Common myeloid progenitor, CD34-positive (primary cell): ENCODE measurements at regions of chr15 and their contacts with region 1.

Region 1: DNA sequence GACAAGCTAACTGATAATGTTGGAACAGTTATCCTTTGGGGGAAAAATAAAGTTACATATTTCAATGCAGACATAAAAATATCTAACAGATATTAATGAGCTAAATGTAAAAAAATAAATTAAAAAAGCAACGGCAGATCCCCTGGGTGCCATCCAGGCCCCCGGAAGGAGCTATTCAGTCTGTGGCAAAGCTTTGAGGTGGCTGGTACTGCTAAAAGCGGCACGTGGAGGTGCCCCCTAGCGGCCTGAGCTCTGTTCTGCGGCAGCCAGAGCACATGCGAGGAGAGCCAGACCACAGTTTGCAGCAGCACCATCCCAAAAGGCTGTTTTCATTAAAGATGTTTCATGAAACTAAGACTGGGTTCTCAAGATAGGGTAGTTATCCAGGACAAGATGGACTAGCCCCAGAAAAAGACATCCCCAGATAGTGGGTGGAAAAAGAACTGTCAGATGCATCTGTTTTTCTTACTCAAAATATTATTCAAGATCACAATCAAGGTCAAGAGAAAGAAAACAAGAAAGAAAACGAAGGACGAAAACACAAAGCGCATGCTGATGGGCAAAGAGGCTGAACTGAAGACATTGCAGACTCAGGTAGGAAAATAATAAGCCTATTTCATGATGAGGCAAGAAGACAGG is 18.7 kb downstream of the AP3S2 start:
- DNase-seq: peak; percentile 77 to 86 (median 81)
- H3K4me3 ChIP-seq: no peak overlapping the region
- H3K27ac ChIP-seq: no peak overlapping the region
- H3K4me1 ChIP-seq: peaks cover 0 to 3% (median 0%) of the 10 kb centered on the region in 4 experiments
- H3K27me3 ChIP-seq: no peaks in the 10 kb centered on the region

Region 2: GRCh38 chr15:89740137-89740536 is 134.9 kb before region 1 on chr15:
- CTCF ChIA-PET with region 1: interaction called, 19 read pairs
- POLR2A ChIA-PET with region 1: no interaction called
- DNase-seq: peak; percentile 76 to 85 (median 78)
- H3K4me3 ChIP-seq: peak overlapping the region in 2 of 7 experiments; percentile 20 to 66
- H3K27ac ChIP-seq: no peak overlapping the region
- H3K4me1 ChIP-seq: peaks cover 0 to 2% (median 0%) of the 10 kb centered on the region in 4 experiments
- H3K27me3 ChIP-seq: no peaks in the 10 kb centered on the region

Region 3: DNA sequence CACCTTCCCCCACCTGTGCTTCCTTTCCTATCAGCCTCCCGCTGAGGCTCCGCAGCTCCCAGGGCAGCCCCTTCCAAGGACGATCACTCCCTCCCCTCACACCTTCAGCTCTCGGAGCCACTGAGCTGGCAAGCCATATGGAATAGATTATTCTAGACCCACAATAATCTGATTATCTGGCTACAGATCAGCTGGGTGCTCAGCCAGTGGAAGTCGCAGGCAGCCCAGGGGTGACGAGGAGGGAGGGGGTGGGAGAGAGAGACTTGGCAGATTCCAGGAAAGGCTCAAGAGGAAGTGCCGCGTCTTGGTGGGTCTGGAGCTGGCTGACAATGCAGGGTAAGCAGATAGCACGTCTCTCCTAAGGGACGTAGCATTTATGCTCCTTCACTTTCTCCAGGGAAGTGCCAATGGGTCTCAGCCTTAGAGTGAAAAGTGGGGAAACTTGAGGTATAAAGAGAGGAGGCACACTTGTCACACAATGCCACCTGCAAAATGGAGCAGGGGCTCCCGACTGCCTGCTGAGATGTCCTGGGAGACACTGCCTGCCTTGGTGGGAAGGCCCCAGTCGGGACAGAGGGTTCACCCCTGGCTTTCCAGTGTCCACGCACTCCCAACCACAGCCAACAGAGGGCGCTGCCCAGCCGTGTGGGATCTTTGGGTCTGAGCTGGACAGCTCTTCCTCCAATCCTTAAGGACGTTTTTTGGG is 114.6 kb before region 1 on chr15:
- CTCF ChIA-PET with region 1: interaction called, 240 read pairs
- POLR2A ChIA-PET with region 1: interaction called, 3 read pairs
- DNase-seq: peak; percentile 59 to 73 (median 67)
- H3K4me3 ChIP-seq: no peak overlapping the region
- H3K27ac ChIP-seq: no peak overlapping the region
- H3K4me1 ChIP-seq: peaks cover 0 to 13% (median 3%) of the 10 kb centered on the region in 4 experiments
- H3K27me3 ChIP-seq: no peaks in the 10 kb centered on the region

Region 4: GRCh38 chr15:89768060-89768500 is 107.0 kb before region 1 on chr15:
- CTCF ChIA-PET with region 1: interaction called, 240 read pairs
- POLR2A ChIA-PET with region 1: no interaction called
- DNase-seq: no peak
- H3K4me3 ChIP-seq: no peak overlapping the region
- H3K27ac ChIP-seq: no peak overlapping the region
- H3K4me1 ChIP-seq: no peaks in the 10 kb centered on the region
- H3K27me3 ChIP-seq: no peaks in the 10 kb centered on the region

Region 5: DNA sequence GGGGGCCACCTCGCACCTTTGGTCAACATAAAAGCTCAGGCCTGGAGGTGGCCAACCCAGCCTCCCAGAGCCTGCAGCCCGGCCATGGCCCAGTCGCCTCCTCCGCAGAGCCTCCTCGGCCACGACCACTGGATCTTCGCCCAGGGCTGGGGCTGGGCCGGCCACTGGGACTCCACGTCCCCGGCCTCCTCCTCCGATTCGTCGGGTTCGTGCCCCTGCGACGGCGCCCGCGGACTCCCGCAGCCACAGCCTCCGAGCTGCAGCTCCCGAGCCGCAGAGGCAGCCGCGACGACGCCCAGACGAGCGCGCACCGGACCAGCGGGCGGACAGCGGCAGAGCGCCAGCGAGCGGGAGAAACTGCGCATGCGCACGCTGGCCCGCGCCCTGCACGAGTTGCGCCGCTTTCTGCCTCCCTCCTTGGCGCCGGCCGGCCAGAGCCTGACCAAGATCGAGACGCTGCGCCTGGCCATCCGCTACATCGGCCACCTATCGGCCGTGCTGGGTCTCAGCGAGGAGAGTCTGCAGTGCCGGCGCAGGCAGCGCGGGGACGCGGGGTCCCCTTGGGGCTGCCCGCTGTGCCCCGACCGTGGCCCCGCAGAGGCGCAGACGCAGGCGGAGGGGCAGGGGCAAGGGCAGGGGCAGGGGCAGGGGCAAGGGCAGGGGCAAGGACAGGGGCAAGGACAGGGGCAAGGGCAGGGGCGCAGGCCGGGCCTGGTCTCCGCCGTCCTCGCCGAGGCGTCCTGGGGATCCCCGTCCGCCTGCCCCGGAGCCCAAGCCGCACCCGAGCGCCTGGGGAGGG is 98.6 kb before region 1 on chr15 and contains the start of gene MESP2:
- CTCF ChIA-PET with region 1: interaction called, 51 read pairs
- POLR2A ChIA-PET with region 1: no interaction called
- DNase-seq: peak; percentile 31 to 64 (median 60)
- H3K4me3 ChIP-seq: peak within 1 kb of the TSS; percentile 15 to 75 (median 49)
- H3K27ac ChIP-seq: no peak within 1 kb of the TSS
- H3K4me1 ChIP-seq: peaks cover 0 to 30% (median 21%) of the 10 kb centered on the region in 4 experiments
- H3K27me3 ChIP-seq: peaks cover 0 to 16% (median 2%) of the 10 kb centered on the region in 5 experiments

Region 6: DNA sequence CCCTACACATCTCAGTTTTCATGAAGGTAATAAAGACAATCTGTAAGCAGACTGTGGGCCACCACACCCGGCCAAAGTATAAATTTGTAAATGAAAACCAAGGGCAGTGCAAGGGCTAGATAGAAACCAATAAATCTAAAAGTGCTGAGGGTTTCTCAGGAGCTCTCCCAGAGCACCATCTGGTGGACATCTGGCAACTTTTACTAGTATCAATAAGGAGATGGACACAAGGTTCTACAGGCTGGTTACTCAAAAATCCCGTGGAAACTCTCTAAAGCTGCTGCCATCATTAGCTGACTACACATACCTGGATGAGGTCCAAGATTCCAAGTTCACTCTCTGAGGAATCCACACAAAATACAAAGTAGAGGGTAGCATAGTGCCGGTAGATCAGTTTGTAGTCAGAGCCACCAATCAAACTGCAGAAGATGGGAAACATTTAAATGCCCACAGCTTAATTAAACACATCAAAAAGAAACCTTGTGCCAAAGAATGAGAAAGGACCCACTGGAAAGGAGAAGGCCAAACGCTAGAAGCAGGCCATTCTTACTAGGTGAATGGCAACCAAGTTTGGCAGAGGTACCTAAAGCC is 13.3 kb after region 1 on chr15:
- CTCF ChIA-PET with region 1: interaction called, 57 read pairs
- POLR2A ChIA-PET with region 1: no interaction called
- DNase-seq: peak; percentile 46 to 72 (median 58)
- H3K4me3 ChIP-seq: no peak overlapping the region
- H3K27ac ChIP-seq: no peak overlapping the region
- H3K4me1 ChIP-seq: peaks cover 3 to 8% (median 6%) of the 10 kb centered on the region in 4 experiments
- H3K27me3 ChIP-seq: no peaks in the 10 kb centered on the region

Region 7: DNA sequence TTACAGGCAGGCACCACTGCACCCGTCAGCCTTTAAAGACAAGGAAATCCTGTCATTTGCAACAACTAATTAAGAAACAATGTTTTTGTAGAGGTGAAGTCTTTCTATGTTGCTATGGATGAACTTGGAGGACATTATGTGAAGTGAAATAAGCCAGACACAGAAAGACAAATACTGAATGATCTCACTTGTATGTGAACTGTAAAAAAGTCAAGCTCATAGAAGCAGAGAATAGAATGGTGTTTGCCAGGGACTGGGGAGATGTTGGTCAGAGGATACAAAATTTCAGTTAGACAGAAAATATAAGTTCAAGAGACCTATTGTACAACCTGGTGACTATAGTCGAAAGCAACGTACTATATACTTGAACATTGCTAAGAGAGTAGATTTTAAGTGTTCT is 64.9 kb after region 1 on chr15:
- CTCF ChIA-PET with region 1: no interaction called
- POLR2A ChIA-PET with region 1: no interaction called
- DNase-seq: no peak
- H3K4me3 ChIP-seq: no peak overlapping the region
- H3K27ac ChIP-seq: no peak overlapping the region
- H3K4me1 ChIP-seq: peaks cover 7 to 35% (median 22%) of the 10 kb centered on the region in 4 experiments
- H3K27me3 ChIP-seq: no peaks in the 10 kb centered on the region